Left ventricle myocardium superior (tissue), 1 donor: ENCODE measurements at regions of chr1 and their contacts with region 1.

Region 1: GRCh38 chr1:48109390-48110013 is 112.3 kb upstream of the TRABD2B start:
- DNase-seq: no peak
- ATAC-seq: peak; percentile 45

Region 2: GRCh38 chr1:48061162-48062136 is 48.1 kb before region 1 on chr1:
- intact Hi-C with region 1: no loop called
- DNase-seq: peak; percentile 41
- ATAC-seq: peak; percentile 77

Region 3: GRCh38 chr1:48182441-48182840 is 72.9 kb after region 1 on chr1:
- intact Hi-C with region 1: no loop called
- DNase-seq: no peak
- ATAC-seq: no peak

Region 4: DNA sequence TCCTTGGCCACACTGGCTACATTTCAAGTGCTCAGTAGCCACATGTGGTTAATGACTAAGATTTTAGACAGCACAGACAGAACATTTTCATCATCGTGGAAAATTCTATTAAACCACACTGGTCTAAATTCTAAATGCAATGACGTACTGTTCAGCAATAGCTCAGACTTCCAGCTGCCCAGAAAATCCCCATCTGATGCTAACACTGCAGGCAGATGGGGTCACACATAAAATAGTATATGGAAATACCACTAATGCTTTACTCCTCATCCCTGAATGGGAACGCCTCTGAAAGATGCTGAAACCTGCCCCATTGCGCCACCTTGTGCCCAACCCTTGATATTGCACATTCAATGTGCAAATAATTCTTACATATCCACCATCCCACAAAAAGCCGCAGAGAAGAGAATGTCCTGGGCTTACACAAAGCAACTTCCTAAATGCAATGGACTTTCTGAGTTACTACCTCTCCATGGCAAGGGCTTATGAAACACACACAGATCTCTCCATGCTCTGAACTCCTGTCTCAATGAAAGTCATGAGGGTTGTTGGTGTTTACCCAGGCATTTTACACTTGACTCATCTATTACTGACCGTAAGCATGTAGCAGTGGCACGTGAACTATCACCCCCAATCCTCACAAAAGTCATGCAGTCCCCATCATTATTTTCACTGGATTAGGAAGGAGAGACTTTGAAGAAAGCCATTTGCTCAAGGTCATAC is 92.7 kb after region 1 on chr1:
- intact Hi-C with region 1: loop called (anchors 1 kb)
- DNase-seq: peak; percentile 58
- ATAC-seq: peak; percentile 73

Region 5: DNA sequence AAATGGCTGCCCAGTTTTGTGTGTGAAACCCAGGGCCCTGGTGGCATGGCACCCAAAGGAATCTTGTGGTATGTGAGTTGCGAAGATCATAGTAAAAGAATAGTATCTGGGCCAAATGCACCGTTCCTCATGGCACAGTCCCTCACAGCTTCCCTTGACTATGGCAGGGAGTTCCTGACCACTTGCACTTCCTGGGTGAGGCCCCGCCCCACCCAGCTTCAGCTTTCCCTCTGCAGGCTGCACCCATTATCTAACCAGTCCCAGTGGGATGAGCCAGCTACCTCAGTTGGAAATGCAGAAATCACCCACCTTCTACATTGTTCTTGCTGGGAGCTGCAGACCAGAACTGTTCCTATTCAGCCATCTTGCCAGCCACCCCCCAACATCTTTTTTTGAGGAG is 176.0 kb after region 1 on chr1:
- intact Hi-C with region 1: no loop called
- DNase-seq: no peak
- ATAC-seq: no peak

Region 6: GRCh38 chr1:48697066-48697707 is 587.7 kb after region 1 on chr1:
- intact Hi-C with region 1: loop called (anchors 10 kb)
- DNase-seq: peak; percentile 73
- ATAC-seq: peak; percentile 36